ENCODE measurements at regions of chr5 and their contacts with region 1.

Region 1: GRCh38 chr5:145554399-145554798 is 280.7 kb downstream of the PRELID2 start:
- DNase-seq: no peak
- H3K4me3 ChIP-seq: no peak overlapping the region
- H3K27ac ChIP-seq: no peak overlapping the region
- H3K4me1 ChIP-seq: no peaks in the 10 kb centered on the region
- H3K27me3 ChIP-seq: no peaks in the 10 kb centered on the region
- CTCF ChIP-seq: no peak
- POLR2A ChIP-seq: no peak

Region 2: GRCh38 chr5:144084971-144085370 is 1469.4 kb before region 1 on chr5:
- intact Hi-C with region 1: loop called (anchors 5 kb)
- DNase-seq: no peak
- H3K4me3 ChIP-seq: no peak overlapping the region
- H3K27ac ChIP-seq: no peak overlapping the region
- H3K4me1 ChIP-seq: no peaks in the 10 kb centered on the region
- H3K27me3 ChIP-seq: no peaks in the 10 kb centered on the region
- CTCF ChIP-seq: no peak
- POLR2A ChIP-seq: no peak

Region 3: GRCh38 chr5:144237851-144238250 is 1316.5 kb before region 1 on chr5:
- intact Hi-C with region 1: loop called (anchors 5 kb)
- DNase-seq: no peak
- H3K4me3 ChIP-seq: no peak overlapping the region
- H3K27ac ChIP-seq: no peak overlapping the region
- H3K4me1 ChIP-seq: no peaks in the 10 kb centered on the region
- H3K27me3 ChIP-seq: no peaks in the 10 kb centered on the region
- CTCF ChIP-seq: no peak
- POLR2A ChIP-seq: no peak

Region 4: GRCh38 chr5:146188358-146188757 is 634.0 kb after region 1 on chr5:
- intact Hi-C with region 1: no loop called
- DNase-seq: no peak
- H3K4me3 ChIP-seq: no peak overlapping the region
- H3K27ac ChIP-seq: no peak overlapping the region
- H3K4me1 ChIP-seq: no peaks in the 10 kb centered on the region
- H3K27me3 ChIP-seq: no peaks in the 10 kb centered on the region
- CTCF ChIP-seq: no peak
- POLR2A ChIP-seq: no peak

Measured in breast epithelium (tissue), 4 donors.